Ovary (tissue), 10 donors: ENCODE measurements at regions of chr3 and their contacts with region 1.

Region 1: DNA sequence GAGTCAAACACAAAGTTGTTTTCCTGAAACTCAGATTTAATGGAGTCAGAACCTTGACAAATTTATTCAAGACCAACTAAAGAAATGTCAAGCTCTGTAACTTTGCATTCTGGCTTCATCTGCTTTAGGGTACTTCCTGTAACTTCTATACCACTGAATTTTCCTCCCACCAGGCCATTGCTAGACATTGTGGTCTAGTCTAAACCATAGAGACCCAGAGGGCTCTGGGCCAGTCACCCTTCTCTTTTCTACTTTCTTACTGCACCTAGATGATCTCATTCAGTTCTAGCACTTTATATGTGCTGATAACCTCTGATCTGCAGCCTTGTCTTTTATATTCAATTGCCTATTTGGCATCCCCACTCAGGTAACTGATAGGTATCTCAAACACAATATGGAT is 2.8 kb upstream of the OR5K1 start:
- DNase-seq: no peak
- H3K4me3 ChIP-seq: no peak overlapping the region
- H3K27ac ChIP-seq: no peak overlapping the region
- H3K4me1 ChIP-seq: no peaks in the 10 kb centered on the region
- H3K27me3 ChIP-seq: no peaks in the 10 kb centered on the region
- CTCF ChIP-seq: no peak
- EP300 ChIP-seq: no peak
- POLR2A ChIP-seq: no peak

Region 2: DNA sequence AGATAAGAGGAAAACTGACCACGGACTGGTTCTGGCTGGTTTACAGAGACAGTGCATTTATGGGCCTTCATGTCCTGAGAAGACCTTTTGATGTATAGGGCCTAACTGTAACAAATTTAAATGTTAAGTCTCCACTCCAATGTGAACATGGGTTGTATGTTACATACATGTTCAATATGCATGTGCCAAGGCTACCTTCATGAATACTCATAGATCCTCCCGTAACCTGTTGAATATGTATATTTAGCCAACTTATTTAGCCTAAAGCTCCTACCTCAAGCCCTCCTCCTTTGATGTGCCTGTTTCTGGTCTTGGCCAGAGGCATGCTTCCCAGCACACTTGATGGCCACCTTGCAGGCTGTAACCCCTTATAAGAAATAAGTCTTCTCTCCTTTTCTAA is 178.0 kb before region 1 on chr3 and contains the start of gene OR5H2:
- intact Hi-C with region 1: no loop called
- DNase-seq: no peak
- H3K4me3 ChIP-seq: no peak within 1 kb of the TSS
- H3K27ac ChIP-seq: no peak within 1 kb of the TSS
- H3K4me1 ChIP-seq: no peaks in the 10 kb centered on the region
- H3K27me3 ChIP-seq: no peaks in the 10 kb centered on the region
- CTCF ChIP-seq: no peak
- EP300 ChIP-seq: no peak
- POLR2A ChIP-seq: no peak
- total RNA-seq, gene OR5H2: not detected

Region 3: DNA sequence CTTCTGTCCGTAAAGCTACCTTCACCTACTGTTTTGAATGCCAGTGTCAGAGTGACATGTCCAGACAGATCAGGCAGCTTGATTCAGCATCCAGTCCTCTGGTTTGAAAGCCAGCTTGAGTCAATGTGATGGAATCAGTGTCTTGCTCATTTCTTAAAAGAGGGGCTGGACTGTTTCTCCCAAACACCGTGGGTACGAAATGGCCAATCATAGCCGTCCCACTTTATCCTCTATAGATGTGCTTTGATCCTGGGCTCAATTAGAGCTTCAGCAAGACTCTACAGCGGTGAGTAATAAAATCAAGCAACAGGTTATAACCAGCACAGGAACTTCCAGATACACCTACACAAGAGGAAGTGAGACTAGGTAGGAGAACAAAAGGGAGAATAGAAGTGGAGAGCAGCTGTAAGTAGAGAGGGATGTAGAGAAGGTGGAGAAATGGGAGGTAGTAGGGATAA is 14.2 kb before region 1 on chr3:
- intact Hi-C with region 1: loop called in 1 of 4 experiments (anchors 2 kb)
- DNase-seq: no peak
- H3K4me3 ChIP-seq: no peak overlapping the region
- H3K27ac ChIP-seq: no peak overlapping the region
- H3K4me1 ChIP-seq: no peaks in the 10 kb centered on the region
- H3K27me3 ChIP-seq: no peaks in the 10 kb centered on the region
- CTCF ChIP-seq: no peak
- EP300 ChIP-seq: no peak
- POLR2A ChIP-seq: no peak

Region 4: GRCh38 chr3:98726084-98726483 is 265.9 kb after region 1 on chr3:
- intact Hi-C with region 1: no loop called
- DNase-seq: no peak
- H3K4me3 ChIP-seq: no peak overlapping the region
- H3K27ac ChIP-seq: no peak overlapping the region
- H3K4me1 ChIP-seq: no peaks in the 10 kb centered on the region
- H3K27me3 ChIP-seq: no peaks in the 10 kb centered on the region
- CTCF ChIP-seq: no peak
- EP300 ChIP-seq: no peak
- POLR2A ChIP-seq: no peak